Caco-2 (cell line): ENCODE measurements at regions of chr6 and their contacts with region 1.

Region 1: GRCh38 chr6:56955171-56956045 is 501 bp downstream of the BEND6 start:
- DNase-seq: peak; percentile 81 to 92
- H3K4me3 ChIP-seq: peak overlapping the region; percentile 56
- H3K4me3 Mint-ChIP-seq: peak overlapping the region; percentile 61
- H3K27ac Mint-ChIP-seq: no peak overlapping the region
- H3K4me1 ChIP-seq: peaks cover 2% of the 10 kb centered on the region; the same call in 1 of the 2 replicates
- H3K4me1 Mint-ChIP-seq: no peaks in the 10 kb centered on the region
- H3K27me3 ChIP-seq: peaks cover 3% of the 10 kb centered on the region; the same call in 1 of the 2 replicates
- H3K27me3 Mint-ChIP-seq: peaks cover 15% of the 10 kb centered on the region
- CTCF ChIP-seq: peak; percentile 81 to 85

Region 2: DNA sequence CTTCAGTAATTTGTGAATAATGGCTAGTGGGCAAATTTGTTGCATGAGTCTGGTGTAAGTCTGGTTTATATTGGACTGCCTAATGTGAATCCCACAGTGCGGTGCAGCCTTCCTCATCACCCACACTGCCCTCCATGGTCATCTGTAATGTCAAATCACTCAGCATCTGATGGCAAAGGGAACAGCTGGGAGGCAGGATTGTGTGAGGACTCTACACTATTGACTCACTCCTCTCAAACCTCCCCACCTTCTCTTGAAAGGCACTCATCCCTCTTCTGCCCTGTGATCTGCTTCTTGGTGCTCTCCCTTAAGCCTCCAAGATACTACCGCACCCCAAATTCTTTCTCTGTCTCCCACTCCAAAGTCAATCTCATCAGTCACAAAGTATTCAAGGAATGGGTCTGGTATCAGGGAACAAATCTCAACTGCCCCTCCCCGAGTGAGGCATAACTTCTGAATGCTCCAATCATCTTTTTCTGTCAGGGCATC is 146.5 kb before region 1 on chr6:
- CTCF ChIA-PET with region 1: no interaction called
- POLR2A ChIA-PET with region 1: no interaction called
- intact Hi-C with region 1: loop called (anchors 5 kb)
- DNase-seq: peak; percentile 55 to 60
- H3K4me3 ChIP-seq: no peak overlapping the region
- H3K4me3 Mint-ChIP-seq: peak overlapping the region; percentile 31
- H3K27ac Mint-ChIP-seq: peak overlapping the region; percentile 87
- H3K4me1 ChIP-seq: peaks cover 42% of the 10 kb centered on the region
- H3K4me1 Mint-ChIP-seq: peaks cover 22% of the 10 kb centered on the region
- H3K27me3 ChIP-seq: no peaks in the 10 kb centered on the region
- H3K27me3 Mint-ChIP-seq: no peaks in the 10 kb centered on the region
- CTCF ChIP-seq: no peak

Region 3: GRCh38 chr6:56902641-56903464 is 52.6 kb before region 1 on chr6:
- CTCF ChIA-PET with region 1: interaction called, 19 read pairs
- POLR2A ChIA-PET with region 1: no interaction called
- intact Hi-C with region 1: loop called (anchors 1 kb)
- DNase-seq: peak in 1 of 2 experiments; percentile 13
- H3K4me3 ChIP-seq: no peak overlapping the region
- H3K4me3 Mint-ChIP-seq: peak overlapping the region; percentile 0
- H3K27ac Mint-ChIP-seq: no peak overlapping the region
- H3K4me1 ChIP-seq: 0 out of 2 replicates have a peak, but pooled peaks cover 6% of the 10 kb centered on the region
- H3K4me1 Mint-ChIP-seq: peaks cover 22% of the 10 kb centered on the region
- H3K27me3 ChIP-seq: no peaks in the 10 kb centered on the region
- H3K27me3 Mint-ChIP-seq: peaks cover 2% of the 10 kb centered on the region
- CTCF ChIP-seq: peak; percentile 67

Region 4: DNA sequence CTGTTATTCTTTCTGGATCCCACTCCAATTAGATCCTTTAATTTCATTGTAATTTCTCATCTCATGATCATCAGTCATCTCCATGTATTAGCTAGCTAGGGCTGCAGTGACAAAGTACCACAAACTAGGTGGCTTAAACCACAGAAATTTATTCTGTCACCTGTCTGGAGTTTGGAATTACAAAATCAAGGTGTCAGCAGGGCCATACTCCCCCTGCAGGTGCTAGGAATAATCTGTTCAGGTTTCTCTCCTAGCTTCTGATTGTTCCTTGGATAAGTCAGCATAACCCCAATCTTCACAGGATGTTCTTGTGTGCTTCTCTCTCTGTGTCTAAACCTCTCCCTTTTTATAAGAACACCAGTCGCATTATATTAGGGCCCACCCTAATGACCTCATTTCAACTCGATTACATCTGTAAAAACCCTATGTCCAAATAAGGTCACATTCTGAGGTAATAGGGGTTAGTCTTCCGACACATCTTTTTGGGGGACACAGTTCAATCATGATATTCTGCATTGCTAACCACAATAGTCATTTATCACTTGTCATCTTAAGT is 40.0 kb after region 1 on chr6:
- CTCF ChIA-PET with region 1: interaction called, 6 read pairs
- POLR2A ChIA-PET with region 1: no interaction called
- intact Hi-C with region 1: loop called (anchors 2 kb)
- DNase-seq: peak in 1 of 2 experiments; percentile 18
- H3K4me3 ChIP-seq: no peak overlapping the region
- H3K4me3 Mint-ChIP-seq: no peak overlapping the region
- H3K27ac Mint-ChIP-seq: no peak overlapping the region
- H3K4me1 ChIP-seq: no peaks in the 10 kb centered on the region
- H3K4me1 Mint-ChIP-seq: no peaks in the 10 kb centered on the region
- H3K27me3 ChIP-seq: no peaks in the 10 kb centered on the region
- H3K27me3 Mint-ChIP-seq: peaks cover 9% of the 10 kb centered on the region
- CTCF ChIP-seq: peak; percentile 49 to 55

Region 5: DNA sequence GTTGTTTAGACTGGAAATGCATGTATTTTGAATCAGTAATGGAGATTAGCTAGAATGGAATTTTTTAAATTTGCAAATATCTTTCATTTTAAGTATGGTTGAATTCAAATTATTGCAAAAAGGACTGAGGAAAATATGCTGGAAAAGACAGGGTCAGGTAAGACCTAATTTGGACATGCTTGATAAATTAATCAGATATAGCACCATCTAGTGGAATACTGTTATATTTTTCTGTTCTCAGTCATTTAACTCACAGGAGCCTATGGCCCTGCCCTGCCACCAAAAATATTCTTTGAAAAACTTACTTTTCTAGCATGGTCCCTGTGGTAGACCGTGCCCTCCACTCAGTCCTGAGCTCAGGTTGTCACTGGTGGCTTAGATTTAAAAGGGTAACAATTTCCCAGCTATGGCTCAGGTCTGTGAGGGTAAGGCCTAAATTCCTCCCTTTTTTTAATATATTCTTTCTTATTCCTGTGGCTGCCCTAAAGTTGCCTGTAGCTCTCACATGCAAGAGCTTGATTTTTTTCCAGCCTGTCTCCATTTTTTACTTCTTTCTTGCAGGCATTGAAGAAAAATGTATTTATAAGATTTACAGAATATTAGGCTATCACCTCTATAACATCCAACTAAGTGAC is 65.8 kb after region 1 on chr6:
- CTCF ChIA-PET with region 1: no interaction called
- POLR2A ChIA-PET with region 1: no interaction called
- intact Hi-C with region 1: loop called (anchors 1 kb)
- DNase-seq: peak in 1 of 2 experiments; percentile 8
- H3K4me3 ChIP-seq: no peak overlapping the region
- H3K4me3 Mint-ChIP-seq: no peak overlapping the region
- H3K27ac Mint-ChIP-seq: no peak overlapping the region
- H3K4me1 ChIP-seq: no peaks in the 10 kb centered on the region
- H3K4me1 Mint-ChIP-seq: no peaks in the 10 kb centered on the region
- H3K27me3 ChIP-seq: no peaks in the 10 kb centered on the region
- H3K27me3 Mint-ChIP-seq: peaks cover 8% of the 10 kb centered on the region
- CTCF ChIP-seq: peak; percentile 25 to 51

Region 6: DNA sequence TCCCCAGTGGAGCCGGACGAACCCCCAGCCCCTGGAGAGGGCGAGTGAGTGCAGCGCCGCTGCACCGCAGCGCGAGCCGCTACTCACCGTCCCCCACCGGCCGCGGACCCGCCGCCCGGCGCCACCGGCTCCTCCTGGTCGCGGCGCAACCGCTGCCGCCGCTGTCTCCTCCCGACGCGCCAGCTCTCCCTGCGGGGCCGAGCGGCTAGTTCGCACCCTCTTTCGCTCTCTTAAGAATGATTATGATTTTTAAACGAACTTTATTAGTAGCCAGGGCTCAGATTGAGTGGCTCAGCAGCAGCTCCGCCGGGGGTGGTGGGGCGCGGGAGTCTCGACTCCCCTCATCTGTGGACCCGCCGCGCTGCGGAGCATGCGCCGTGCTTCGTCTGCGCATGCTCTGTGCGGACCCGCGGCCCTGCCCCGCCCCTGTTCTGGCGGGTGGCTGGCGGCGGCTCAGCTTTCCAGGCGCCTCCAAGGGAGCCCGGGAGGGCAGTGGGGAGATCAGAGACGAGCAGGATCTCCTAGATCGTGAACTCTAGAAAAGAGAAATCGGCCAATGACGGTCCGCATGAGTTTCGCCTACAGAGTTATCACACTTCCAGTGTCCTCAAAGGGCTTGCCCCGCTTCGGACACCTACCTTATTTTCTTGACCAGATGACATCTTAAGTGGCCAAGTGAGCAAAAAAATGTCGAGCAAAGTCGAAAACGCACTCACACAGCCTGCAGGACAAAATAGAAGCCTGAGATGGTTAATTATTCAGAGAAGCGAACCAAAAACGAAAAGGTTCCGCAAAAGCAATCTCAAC is 266.7 kb after region 1 on chr6 and contains the start of gene RAB23:
- CTCF ChIA-PET with region 1: no interaction called
- POLR2A ChIA-PET with region 1: no interaction called
- intact Hi-C with region 1: no loop called
- DNase-seq: peak; percentile 81 to 93
- H3K4me3 ChIP-seq: peak within 1 kb of the TSS; percentile 78
- H3K4me3 Mint-ChIP-seq: peak within 1 kb of the TSS; percentile 94
- H3K27ac Mint-ChIP-seq: peak within 1 kb of the TSS; percentile 90
- H3K4me1 ChIP-seq: peaks cover 4% of the 10 kb centered on the region; the same call in 1 of the 2 replicates
- H3K4me1 Mint-ChIP-seq: peaks cover 10% of the 10 kb centered on the region
- H3K27me3 ChIP-seq: no peaks in the 10 kb centered on the region
- H3K27me3 Mint-ChIP-seq: no peaks in the 10 kb centered on the region
- CTCF ChIP-seq: no peak
- total RNA-seq, gene RAB23: 12.6 and 13.7 TPM in 2 replicates